Activated CD8-positive, alpha-beta T cell treated with anti-CD3 and anti-CD28 coated beads, Interleukin-2, amount 10 ng/mL, durations not matched to agents 7 days and 5 days (primary cell): ENCODE measurements at regions of chr4 and their contacts with region 1.

Region 1: DNA sequence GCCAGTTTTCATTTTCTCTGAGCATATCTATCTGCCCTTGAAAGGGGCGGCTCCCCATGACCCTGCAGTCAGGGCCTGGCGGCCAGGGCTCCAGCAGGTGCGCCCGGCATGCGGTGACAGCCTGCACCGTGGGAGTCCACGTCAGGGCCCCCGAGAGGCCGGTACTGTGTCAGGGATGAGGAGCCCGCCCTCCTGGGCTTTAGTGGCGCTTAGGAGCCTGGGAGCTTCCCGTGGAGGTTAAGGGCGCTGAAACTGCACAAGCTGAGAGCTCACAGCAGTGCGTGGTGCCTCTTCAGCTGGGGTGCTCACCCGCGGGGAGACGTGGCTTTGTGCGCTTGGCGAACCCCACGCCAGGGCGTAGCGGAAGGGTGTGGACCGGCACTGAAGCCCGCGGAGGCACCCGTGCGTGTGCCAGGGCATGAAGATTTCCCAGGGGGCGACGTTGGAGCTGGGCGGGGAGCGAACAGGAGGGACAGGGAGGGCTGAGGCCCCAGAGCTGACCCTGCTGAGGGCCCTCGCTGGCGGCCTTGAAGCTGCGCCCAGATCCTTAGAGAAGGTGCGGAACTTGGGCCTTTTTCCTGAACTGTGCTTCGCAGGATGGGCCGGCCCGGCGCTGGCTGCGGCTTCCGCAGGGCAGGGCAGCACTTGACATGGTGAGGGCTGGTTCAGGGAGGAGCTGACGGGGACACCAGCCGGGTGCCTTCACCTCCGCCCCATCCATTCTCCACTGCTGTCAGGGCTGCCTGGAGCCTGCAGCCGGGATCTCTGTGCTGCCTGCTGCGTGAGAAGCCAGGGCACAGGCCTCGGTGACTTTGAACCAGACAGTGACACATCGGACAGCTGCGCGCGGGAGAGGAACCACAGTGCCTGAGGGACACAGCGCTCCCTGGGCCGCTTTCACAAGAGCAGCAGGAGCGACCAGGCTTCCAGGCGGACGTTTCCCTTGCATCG is 32.9 kb downstream of the HTT-AS start:
- DNase-seq: peak; percentile 62
- ATAC-seq: peak; percentile 60
- H3K4me3 Mint-ChIP-seq: peak overlapping the region; percentile 84
- H3K27ac Mint-ChIP-seq: peak overlapping the region; percentile 95
- H3K4me1 Mint-ChIP-seq: peaks cover 81% of the 10 kb centered on the region
- H3K27me3 Mint-ChIP-seq: peaks cover 6% of the 10 kb centered on the region

Region 2: GRCh38 chr4:2977211-2978088 is 64.0 kb before region 1 on chr4:
- CTCF ChIA-PET with region 1: interaction called, 25 read pairs
- POLR2A ChIA-PET with region 1: no interaction called
- DNase-seq: no peak
- ATAC-seq: no peak
- H3K4me3 Mint-ChIP-seq: no peak overlapping the region
- H3K27ac Mint-ChIP-seq: no peak overlapping the region
- H3K4me1 Mint-ChIP-seq: peaks cover 2% of the 10 kb centered on the region
- H3K27me3 Mint-ChIP-seq: peaks cover 15% of the 10 kb centered on the region

Region 3: GRCh38 chr4:3062471-3062870 is 21.0 kb after region 1 on chr4:
- CTCF ChIA-PET with region 1: no interaction called
- POLR2A ChIA-PET with region 1: no interaction called
- DNase-seq: no peak
- ATAC-seq: no peak
- H3K4me3 Mint-ChIP-seq: no peak overlapping the region
- H3K27ac Mint-ChIP-seq: no peak overlapping the region
- H3K4me1 Mint-ChIP-seq: no peaks in the 10 kb centered on the region
- H3K27me3 Mint-ChIP-seq: peaks cover 4% of the 10 kb centered on the region